Activated naive CD4-positive, alpha-beta T cell treated with anti-CD3 and anti-CD28 coated beads for 36 hours (primary cell): ENCODE measurements at regions of chr14 and their contacts with region 1.

Region 1: DNA sequence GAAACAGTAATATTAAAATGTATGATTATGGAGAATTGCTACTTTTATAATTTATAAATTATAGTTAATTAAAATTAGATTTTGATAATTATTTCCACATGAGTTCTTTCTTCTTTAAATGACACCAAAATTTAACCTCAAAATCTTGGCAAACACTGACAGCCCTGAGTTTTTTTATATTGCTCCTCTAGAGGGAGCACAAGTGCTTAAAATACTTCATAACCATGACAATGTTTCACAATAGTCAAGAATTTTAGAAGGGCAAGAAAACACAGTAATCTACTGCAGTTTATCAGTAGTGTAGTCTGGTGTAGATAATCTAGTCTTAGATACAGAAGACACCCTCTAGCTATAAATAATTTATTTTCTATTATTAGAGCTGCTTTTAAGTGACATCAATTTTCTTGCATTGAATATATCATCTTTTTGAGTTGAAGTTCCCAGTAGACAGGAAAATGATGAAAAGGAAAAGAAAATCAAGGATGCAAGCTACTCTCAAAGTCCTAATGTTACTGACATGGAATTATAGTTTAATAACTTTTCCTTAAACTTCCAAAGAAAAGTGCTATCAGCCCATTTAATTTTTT is 14.3 kb upstream of the PTGER2 start:
- DNase-seq: no peak
- H3K4me3 Mint-ChIP-seq: no peak overlapping the region
- H3K27ac Mint-ChIP-seq: no peak overlapping the region
- H3K4me1 Mint-ChIP-seq: peaks cover 6% of the 10 kb centered on the region
- H3K27me3 Mint-ChIP-seq: no peaks in the 10 kb centered on the region

Region 2: GRCh38 chr14:52313903-52314594 is 14.3 kb after region 1 on chr14 and contains the start of gene PTGER2:
- CTCF ChIA-PET with region 1: interaction called, 12 read pairs
- intact Hi-C with region 1: no loop called
- DNase-seq: peak; percentile 64
- H3K4me3 Mint-ChIP-seq: peak within 1 kb of the TSS; percentile 93
- H3K27ac Mint-ChIP-seq: peak within 1 kb of the TSS; percentile 79
- H3K4me1 Mint-ChIP-seq: peaks cover 56% of the 10 kb centered on the region
- H3K27me3 Mint-ChIP-seq: peaks cover 19% of the 10 kb centered on the region
- total RNA-seq, gene PTGER2: 0.67 to 1.2 TPM

Region 3: GRCh38 chr14:52363961-52364360 is 64.2 kb after region 1 on chr14:
- CTCF ChIA-PET with region 1: interaction called, 11 read pairs
- intact Hi-C with region 1: no loop called
- DNase-seq: no peak
- H3K4me3 Mint-ChIP-seq: no peak overlapping the region
- H3K27ac Mint-ChIP-seq: no peak overlapping the region
- H3K4me1 Mint-ChIP-seq: peaks cover 2% of the 10 kb centered on the region
- H3K27me3 Mint-ChIP-seq: no peaks in the 10 kb centered on the region

Region 4: GRCh38 chr14:52473557-52473956 is 173.8 kb after region 1 on chr14:
- CTCF ChIA-PET with region 1: interaction called, 24 read pairs
- intact Hi-C with region 1: loop called (anchors 1 kb)
- DNase-seq: no peak
- H3K4me3 Mint-ChIP-seq: no peak overlapping the region
- H3K27ac Mint-ChIP-seq: no peak overlapping the region
- H3K4me1 Mint-ChIP-seq: peaks cover 4% of the 10 kb centered on the region
- H3K27me3 Mint-ChIP-seq: no peaks in the 10 kb centered on the region

Region 5: DNA sequence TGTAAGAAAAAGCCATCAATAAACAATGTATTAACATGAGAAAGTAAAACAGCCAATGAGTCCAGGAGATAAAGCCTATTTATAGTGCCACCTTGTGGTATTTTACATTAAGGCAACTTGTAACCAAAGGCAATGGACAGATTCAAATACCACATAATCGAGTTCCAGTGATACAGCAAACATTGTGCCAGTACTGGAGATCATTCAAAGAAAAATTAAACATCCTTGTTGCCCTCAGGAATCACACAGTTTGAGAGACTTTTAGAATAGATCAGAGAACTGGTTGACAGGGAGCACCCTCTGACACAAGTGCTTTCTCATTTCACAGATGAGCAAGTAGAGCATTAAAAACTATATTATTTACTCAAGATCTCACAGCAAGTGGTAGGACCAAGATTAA is 755.2 kb after region 1 on chr14:
- CTCF ChIA-PET with region 1: no interaction called
- intact Hi-C with region 1: loop called (anchors 10 kb)
- DNase-seq: no peak
- H3K4me3 Mint-ChIP-seq: no peak overlapping the region
- H3K27ac Mint-ChIP-seq: no peak overlapping the region
- H3K4me1 Mint-ChIP-seq: peaks cover 3% of the 10 kb centered on the region
- H3K27me3 Mint-ChIP-seq: no peaks in the 10 kb centered on the region